Right ventricle myocardium superior (tissue), 1 donor: ENCODE measurements at regions of chr4 and their contacts with region 1.

Region 1: GRCh38 chr4:185096032-185096653 is 46.9 kb upstream of the SLC25A4 start:
- DNase-seq: no peak
- ATAC-seq: peak; percentile 52

Region 2: GRCh38 chr4:184688447-184688846 is 407.7 kb before region 1 on chr4:
- intact Hi-C with region 1: no loop called
- DNase-seq: no peak
- ATAC-seq: no peak

Region 3: GRCh38 chr4:184937745-184938144 is 158.4 kb before region 1 on chr4:
- intact Hi-C with region 1: no loop called
- DNase-seq: no peak
- ATAC-seq: no peak

Region 4: GRCh38 chr4:185054876-185055275 is 41.3 kb before region 1 on chr4:
- intact Hi-C with region 1: no loop called
- DNase-seq: no peak
- ATAC-seq: no peak

Region 5: GRCh38 chr4:185134307-185134869 is 38.2 kb after region 1 on chr4:
- intact Hi-C with region 1: loop called (anchors 5 kb)
- DNase-seq: no peak
- ATAC-seq: peak; percentile 63

Region 6: GRCh38 chr4:185263419-185263818 is 167.3 kb after region 1 on chr4:
- intact Hi-C with region 1: no loop called
- DNase-seq: no peak
- ATAC-seq: no peak